Activated CD4-positive, alpha-beta memory T cell treated with anti-CD3 and anti-CD28 coated beads, Interleukin-2, amount 10 ng/mL, durations not matched to agents 7 days and 5 days (primary cell): ENCODE measurements at regions of chr6 and their contacts with region 1.

Region 1: DNA sequence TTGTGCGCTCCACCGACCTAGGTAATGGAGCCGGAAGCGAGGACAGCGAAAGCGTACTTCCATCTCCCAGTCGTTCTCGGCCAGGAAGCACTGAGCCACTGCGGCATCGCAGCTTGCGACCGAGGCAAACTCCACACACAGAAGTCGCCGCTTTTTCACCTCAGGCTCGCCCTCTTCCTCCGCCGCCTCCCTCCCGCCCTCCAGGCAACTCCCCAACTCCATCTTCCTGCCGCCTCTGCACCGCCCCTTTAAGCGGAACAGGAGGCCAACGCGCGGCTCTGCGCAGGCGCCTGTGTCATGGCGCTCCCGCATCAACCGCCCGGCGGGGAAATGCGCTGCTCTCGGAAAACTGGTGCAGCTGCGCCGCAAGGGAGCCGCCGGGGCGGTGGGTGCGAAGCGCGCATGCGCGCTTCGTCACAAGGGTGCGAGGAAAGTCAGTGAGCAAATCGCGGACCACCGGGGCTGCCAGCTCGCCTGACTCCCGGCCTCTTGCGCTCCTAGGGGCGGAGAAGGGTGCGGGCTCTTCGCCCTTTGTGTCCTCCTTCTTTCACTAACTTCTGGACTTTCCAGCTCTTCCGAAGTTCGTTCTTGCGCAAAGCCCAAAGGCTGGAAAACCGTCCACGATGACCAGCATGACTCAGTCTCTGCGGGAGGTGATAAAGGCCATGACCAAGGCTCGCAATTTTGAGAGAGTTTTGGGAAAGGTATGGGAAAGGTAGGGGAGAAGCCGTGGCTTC is at the starts of genes ACOT13 and TDP2:
- DNase-seq: peak; percentile 96
- H3K4me3 Mint-ChIP-seq: peak within 1 kb of the TSS; percentile 88
- H3K27ac Mint-ChIP-seq: peak within 1 kb of the TSS; percentile 92
- H3K4me1 Mint-ChIP-seq: peaks cover 48% of the 10 kb centered on the region
- H3K27me3 Mint-ChIP-seq: no peaks in the 10 kb centered on the region
- total RNA-seq, gene ACOT13: 19.9 to 21.1 TPM
- total RNA-seq, gene TDP2: 43.8 to 45.4 TPM

Region 2: GRCh38 chr6:24646782-24647181 is 20.0 kb before region 1 on chr6:
- CTCF ChIA-PET with region 1: interaction called, 4 read pairs
- POLR2A ChIA-PET with region 1: interaction called, 25 read pairs
- DNase-seq: no peak
- H3K4me3 Mint-ChIP-seq: peak overlapping the region; percentile 78
- H3K27ac Mint-ChIP-seq: no peak overlapping the region
- H3K4me1 Mint-ChIP-seq: peaks cover 17% of the 10 kb centered on the region
- H3K27me3 Mint-ChIP-seq: peaks cover 23% of the 10 kb centered on the region

Region 3: DNA sequence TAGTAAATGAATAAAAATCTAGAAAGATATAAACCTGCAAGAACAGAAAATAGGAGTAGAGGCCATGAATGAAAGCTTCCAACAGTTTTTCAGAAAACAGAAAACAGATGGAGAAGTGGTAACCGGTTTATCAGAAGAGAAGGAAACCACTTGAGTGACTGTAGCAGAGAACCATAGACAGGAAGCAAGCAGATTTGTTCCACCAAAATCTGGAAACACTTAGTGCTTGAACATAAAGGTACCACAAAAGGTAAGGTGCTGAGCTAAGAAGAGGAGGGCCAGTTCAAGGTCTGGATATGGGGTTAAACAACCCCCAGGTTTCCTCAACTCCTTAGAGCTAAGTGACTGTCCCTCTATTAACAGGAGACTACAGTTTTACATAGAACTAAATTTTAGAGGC is 11.6 kb before region 1 on chr6:
- CTCF ChIA-PET with region 1: no interaction called
- POLR2A ChIA-PET with region 1: interaction called, 15 read pairs
- DNase-seq: no peak
- H3K4me3 Mint-ChIP-seq: no peak overlapping the region
- H3K27ac Mint-ChIP-seq: no peak overlapping the region
- H3K4me1 Mint-ChIP-seq: peaks cover 20% of the 10 kb centered on the region
- H3K27me3 Mint-ChIP-seq: no peaks in the 10 kb centered on the region

Region 4: GRCh38 chr6:24774696-24775519 is 108.1 kb after region 1 on chr6 and contains the start of gene GMNN:
- CTCF ChIA-PET with region 1: no interaction called
- POLR2A ChIA-PET with region 1: interaction called, 12 read pairs
- DNase-seq: peak; percentile 98
- H3K4me3 Mint-ChIP-seq: peak within 1 kb of the TSS; percentile 95
- H3K27ac Mint-ChIP-seq: peak within 1 kb of the TSS; percentile 98
- H3K4me1 Mint-ChIP-seq: peaks cover 32% of the 10 kb centered on the region
- H3K27me3 Mint-ChIP-seq: no peaks in the 10 kb centered on the region
- total RNA-seq, gene GMNN: 67.6 to 69.0 TPM